ENCODE measurements at regions of chr2 and their contacts with region 1.

Region 1: DNA sequence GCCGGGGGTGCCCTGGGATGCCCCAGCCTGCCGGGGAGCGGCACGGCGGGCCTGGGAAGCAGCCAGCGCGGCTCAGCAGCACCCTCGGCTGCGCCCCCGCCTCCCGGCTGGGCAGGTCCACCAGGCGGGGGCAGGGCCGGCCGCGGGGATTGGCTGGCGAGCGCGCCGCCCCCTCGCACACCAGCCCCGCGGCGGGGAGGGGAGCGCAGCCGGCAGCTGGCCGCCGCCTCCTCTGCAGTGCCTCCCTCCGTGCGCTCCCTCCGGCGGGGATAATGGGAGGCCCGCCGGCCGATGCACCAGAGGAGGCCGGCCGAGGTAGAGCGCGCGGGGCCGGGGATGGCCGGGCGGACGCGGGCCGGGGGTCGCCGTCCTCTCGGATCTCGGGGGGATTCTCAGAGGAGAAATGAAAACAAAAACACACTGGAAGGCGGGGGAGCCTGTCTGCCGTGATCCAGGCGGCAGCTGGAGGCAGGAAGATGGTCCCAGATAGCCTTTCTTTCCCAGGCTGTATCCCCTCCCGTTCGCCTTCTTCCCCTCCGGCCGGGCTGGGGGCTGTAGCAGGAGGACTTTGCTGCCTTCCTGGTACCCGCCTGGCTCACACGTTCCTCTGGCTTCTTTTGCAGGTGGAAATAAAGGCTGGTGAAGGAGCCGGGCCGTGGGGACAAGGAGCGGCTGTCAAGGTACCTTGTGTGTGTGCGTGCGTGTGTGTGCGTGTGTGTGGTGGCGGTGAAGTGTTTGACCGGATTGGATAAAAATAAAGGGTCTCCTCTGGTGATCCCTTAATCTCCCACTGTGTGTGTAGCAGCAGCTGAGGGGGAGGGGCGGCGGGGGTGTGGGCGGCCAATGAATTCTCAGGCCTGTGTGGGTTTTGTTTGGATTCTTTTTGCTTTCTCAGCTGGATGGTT is 18.0 kb downstream of the TET3 start:
- DNase-seq: peak; percentile 81
- H3K4me3 Mint-ChIP-seq: peak overlapping the region; percentile 89
- H3K27ac Mint-ChIP-seq: peak overlapping the region; percentile 66
- H3K4me1 Mint-ChIP-seq: peaks cover 69% of the 10 kb centered on the region
- H3K27me3 Mint-ChIP-seq: peaks cover 2% of the 10 kb centered on the region

Region 2: DNA sequence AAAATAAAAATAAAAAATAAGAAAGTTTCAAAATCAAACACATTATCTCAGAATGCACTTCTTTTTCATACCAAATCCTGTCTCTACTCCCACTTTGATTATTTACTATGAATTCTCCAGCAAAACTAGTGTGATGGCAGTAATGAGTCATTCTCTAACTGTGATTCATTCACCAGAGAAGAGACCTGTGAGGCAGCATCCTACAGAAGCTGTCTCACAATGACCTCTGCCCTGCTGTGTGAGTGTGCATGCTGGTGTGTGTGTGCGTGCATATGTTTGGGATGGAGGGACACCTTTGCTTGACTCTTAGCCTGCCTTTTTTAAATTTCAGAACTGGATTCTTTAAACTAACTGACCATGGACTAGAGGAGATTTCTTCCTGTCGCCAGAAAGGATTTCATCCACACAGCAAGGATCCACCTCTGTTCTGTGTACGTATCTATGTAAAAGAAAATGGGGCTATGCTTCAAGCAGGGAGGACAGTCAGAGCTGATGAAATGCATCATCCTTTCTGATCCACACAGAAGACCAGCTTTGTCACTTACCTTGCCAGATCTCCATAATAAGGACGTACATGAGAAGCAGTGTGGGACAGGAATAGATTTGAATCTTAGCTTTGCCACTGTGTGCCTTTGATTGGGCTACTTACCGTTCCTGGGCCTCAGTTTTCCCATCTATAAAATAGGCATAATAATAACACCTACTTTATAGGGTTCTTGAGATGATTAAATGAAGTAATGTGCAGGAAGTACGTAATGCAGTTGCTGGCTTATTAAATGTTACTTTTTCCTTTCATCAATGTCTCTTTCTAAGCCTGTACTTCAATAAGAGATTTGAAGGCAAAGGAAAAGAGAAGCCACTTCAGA is 142.8 kb before region 1 on chr2:
- intact Hi-C with region 1: loop called (anchors 1 kb)
- DNase-seq: no peak
- H3K4me3 Mint-ChIP-seq: no peak overlapping the region
- H3K27ac Mint-ChIP-seq: peak overlapping the region; percentile 56
- H3K4me1 Mint-ChIP-seq: peaks cover 48% of the 10 kb centered on the region
- H3K27me3 Mint-ChIP-seq: no peaks in the 10 kb centered on the region

Region 3: DNA sequence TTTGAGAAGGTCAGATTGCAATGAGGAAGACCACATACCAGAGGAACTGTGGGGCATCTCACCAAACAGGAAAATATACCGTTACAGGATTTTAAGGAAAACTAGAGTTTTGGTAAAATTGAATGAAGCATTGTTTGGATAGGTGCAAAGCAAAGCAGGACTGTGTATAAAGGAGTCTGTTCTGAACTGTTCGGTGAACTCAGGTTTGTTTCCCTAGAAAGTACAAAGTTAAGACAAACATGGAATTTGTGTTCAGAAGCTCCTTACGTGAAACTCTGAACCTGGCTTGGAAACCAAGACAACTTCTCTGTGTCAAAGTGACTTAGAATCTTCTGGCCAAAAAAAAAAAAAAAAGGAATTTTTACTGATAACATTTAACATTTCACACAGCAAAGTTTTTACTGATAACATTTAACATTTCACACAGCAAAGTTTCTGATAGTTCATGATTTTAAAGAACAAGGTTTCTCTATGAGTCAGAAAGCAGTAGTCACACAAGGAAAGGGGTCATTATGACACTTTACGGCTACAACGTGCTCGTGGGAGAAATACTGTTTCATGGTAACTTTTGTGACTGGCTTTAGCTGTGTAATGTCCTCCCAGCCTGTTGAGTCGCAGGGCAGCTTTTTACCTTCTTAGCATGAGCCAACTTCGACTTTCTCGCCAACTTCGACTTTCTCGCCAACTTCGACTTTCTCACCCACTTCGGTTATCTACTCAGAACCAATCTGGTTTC is 39.2 kb before region 1 on chr2:
- intact Hi-C with region 1: no loop called
- DNase-seq: no peak
- H3K4me3 Mint-ChIP-seq: peak overlapping the region; percentile 1
- H3K27ac Mint-ChIP-seq: peak overlapping the region; percentile 86
- H3K4me1 Mint-ChIP-seq: peaks cover 30% of the 10 kb centered on the region
- H3K27me3 Mint-ChIP-seq: no peaks in the 10 kb centered on the region

Region 4: GRCh38 chr2:74031221-74031620 is 28.5 kb after region 1 on chr2:
- intact Hi-C with region 1: loop called (anchors 2 kb)
- DNase-seq: no peak
- H3K4me3 Mint-ChIP-seq: peak overlapping the region; percentile 45
- H3K27ac Mint-ChIP-seq: peak overlapping the region; percentile 45
- H3K4me1 Mint-ChIP-seq: peaks cover 67% of the 10 kb centered on the region
- H3K27me3 Mint-ChIP-seq: no peaks in the 10 kb centered on the region

Measured in activated T-helper 1 cell treated with anti-CD3 and anti-CD28 coated beads, Interleukin-12 subunit alpha, Interleukin-12 subunit beta, Interleukin-2, Interleukin-4 antibody, amounts not matched to agents 30 ng/mL and 10 ng/mL and 1 ng/mL, durations not matched to agents 14 hours and 24 hours and 36 hours (primary cell).